ENCODE measurements at regions of chr14 and their contacts with region 1.

Region 1: DNA sequence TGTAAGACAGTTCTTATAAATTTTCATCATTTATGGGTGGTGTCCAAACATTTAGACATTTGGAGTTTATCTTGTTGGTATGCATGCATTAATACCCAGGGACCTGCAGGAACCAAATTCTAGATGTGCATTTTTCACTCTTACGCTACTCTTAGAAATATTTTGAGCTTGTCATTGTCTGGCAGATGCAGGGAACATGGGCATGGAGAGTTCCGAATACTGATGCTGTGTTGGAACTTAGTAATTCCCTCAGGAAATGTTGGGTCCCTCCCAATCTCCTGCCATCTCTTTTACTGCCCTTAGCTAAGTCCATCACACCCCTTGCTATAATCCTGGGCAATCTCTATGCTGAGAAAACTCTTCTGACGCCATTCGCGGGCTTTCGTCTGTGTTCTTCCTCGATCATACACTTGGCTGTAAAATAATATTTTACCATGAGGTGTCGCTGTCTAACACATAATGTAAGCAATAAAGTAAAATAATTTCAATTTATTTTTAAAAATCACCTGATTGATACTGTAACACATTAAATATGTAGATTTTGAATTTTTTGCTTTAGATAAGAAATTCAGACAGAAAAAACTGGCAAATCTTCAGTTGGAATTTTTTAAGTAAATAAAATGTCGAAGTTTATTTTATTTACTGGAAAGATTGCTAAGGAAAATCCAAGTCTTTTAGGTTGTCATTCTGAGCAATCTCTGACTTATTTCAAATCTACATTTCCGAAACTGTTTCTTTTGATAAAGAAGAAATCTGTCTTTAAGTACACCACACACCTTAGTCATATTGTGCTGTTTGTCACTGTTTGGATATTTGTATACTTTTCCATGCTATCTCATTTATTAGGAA is 304.1 kb upstream of the SSTR1 start:
- DNase-seq: peak; percentile 64
- H3K4me3 ChIP-seq: no peak overlapping the region
- H3K27ac ChIP-seq: no peak overlapping the region
- H3K4me1 ChIP-seq: peaks cover 3% of the 10 kb centered on the region
- H3K27me3 ChIP-seq: peaks cover 22 to 23% of the 10 kb centered on the region in 2 experiments
- CTCF ChIP-seq: peak; percentile 33 to 45
- POLR2A ChIP-seq: no peak

Region 2: DNA sequence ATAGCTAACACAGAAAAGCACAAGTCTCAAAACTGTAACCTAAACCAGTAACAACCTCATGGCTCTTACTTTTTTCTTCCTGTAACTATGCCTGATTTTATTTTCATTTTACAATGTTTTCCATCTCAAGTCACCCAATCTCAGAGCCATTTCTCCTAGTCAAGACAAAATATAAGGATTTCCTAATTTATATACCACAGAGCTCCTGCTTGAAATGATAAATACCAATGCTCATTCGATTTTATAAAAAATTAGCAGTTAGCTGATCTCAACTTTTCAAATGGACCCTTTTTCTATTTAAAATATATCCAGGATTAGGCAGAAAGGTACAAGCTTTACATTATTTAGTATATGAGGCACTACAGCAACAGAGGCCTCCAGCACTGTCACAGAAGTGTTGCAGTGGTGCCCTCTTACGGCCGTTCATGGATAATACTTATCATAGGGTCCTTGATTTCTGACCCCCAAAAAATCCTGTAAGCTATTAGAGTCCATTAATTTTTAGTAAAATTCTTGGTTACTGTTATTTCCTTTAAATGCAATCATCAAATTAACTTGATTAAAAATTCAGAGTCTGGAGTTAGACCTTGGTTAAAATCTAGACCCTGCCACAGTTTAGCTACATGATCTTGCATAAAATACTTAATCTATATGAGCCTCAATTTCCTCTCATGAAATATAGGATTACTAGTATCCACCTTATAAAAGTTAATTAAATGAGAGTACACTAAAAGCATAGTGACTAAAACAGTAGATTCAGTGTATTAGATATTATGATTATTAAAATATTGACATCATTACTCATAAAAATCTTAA is 1131.1 kb after region 1 on chr14:
- CTCF ChIA-PET with region 1: interaction called, 16 read pairs
- POLR2A ChIA-PET with region 1: no interaction called
- dilution Hi-C with region 1: no loop called
- intact Hi-C with region 1: no loop called
- DNase-seq: peak; percentile 53
- H3K4me3 ChIP-seq: no peak overlapping the region
- H3K27ac ChIP-seq: no peak overlapping the region
- H3K4me1 ChIP-seq: no peaks in the 10 kb centered on the region
- H3K27me3 ChIP-seq: no peaks in the 10 kb centered on the region
- CTCF ChIP-seq: peak; percentile 36 to 41
- POLR2A ChIP-seq: no peak